MCF 10A (cell line): ENCODE measurements at regions of chr2 and their contacts with region 1.

Region 1: GRCh38 chr2:235493775-235494715 is at the start of gene AGAP1:
- DNase-seq: peak; percentile 83
- H3K4me3 Mint-ChIP-seq: peak within 1 kb of the TSS; percentile 77
- H3K27ac Mint-ChIP-seq: no peak within 1 kb of the TSS
- H3K4me1 Mint-ChIP-seq: peaks cover 16% of the 10 kb centered on the region
- H3K27me3 Mint-ChIP-seq: no peaks in the 10 kb centered on the region
- CTCF ChIP-seq: no peak
- total RNA-seq, gene AGAP1: 41.3 and 42.4 TPM in 2 replicates

Region 2: DNA sequence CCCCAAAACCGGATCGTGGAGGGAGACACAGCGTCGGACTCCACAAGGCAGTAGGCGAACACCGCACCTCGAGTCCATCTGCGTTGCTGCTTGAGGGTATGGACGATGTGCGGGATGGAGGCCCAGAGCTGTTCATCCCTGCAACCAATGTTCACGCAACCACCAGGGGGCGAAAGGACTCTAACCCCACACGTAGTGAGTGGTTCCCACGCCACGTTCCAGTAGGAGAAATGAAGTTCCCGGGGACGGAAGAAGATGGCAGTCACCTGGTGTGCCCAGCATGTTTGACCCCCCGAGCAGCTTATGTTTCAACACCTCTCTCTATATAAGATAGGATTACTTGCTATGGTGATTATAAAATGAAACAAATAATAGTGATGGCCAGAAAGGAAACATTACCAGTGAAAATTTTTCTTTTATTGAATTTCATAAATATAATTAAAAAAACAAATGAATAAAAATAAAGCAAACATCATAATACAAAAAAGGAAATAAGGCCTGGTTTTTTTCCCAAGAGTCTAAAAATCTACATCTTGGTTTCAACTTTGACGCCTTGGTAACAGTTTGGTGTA is 358.0 kb before region 1 on chr2:
- CTCF ChIA-PET with region 1: interaction called, 4 read pairs
- POLR2A ChIA-PET with region 1: interaction called, 3 read pairs
- intact Hi-C with region 1: loop called (anchors 2 kb)
- DNase-seq: peak; percentile 86
- H3K4me3 Mint-ChIP-seq: peak overlapping the region; percentile 18
- H3K27ac Mint-ChIP-seq: no peak overlapping the region
- H3K4me1 Mint-ChIP-seq: peaks cover 7% of the 10 kb centered on the region
- H3K27me3 Mint-ChIP-seq: peaks cover 36% of the 10 kb centered on the region
- CTCF ChIP-seq: peak; percentile 63

Region 3: GRCh38 chr2:235551965-235552364 is 57.9 kb after region 1 on chr2:
- CTCF ChIA-PET with region 1: no interaction called
- POLR2A ChIA-PET with region 1: no interaction called
- intact Hi-C with region 1: loop called (anchors 5 kb)
- DNase-seq: peak; percentile 70
- H3K4me3 Mint-ChIP-seq: no peak overlapping the region
- H3K27ac Mint-ChIP-seq: no peak overlapping the region
- H3K4me1 Mint-ChIP-seq: peaks cover 6% of the 10 kb centered on the region
- H3K27me3 Mint-ChIP-seq: no peaks in the 10 kb centered on the region
- CTCF ChIP-seq: peak; percentile 57

Region 4: DNA sequence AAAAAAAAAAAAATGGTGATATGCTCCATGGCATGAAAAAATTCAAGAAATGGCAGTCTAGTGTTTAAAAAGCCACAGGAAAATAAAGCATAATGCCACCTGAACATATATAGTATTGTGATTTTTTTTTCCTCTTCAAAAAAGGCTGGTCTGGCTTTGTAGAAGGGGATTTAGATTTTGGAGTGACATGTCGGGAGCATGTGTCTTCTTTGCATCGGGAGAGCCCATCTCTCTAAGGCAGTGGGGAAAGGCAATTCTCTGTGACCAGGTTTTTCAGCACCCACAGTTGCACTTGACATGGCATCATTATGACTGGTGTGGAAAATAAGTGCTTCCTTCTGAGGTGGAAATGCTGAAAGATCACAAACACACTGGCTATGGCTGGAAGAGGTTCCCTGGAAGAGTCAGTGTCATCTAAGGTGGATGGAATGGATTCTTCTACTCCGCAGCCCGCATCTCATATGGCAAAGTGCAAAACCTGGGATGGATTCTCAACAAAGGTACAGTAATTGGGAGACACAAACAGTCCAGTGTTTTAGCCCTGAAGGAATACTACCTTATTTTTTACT is 172.3 kb after region 1 on chr2:
- CTCF ChIA-PET with region 1: no interaction called
- POLR2A ChIA-PET with region 1: no interaction called
- intact Hi-C with region 1: loop called (anchors 10 kb)
- DNase-seq: peak; percentile 88
- H3K4me3 Mint-ChIP-seq: peak overlapping the region; percentile 82
- H3K27ac Mint-ChIP-seq: peak overlapping the region; percentile 83
- H3K4me1 Mint-ChIP-seq: peaks cover 10% of the 10 kb centered on the region
- H3K27me3 Mint-ChIP-seq: no peaks in the 10 kb centered on the region
- CTCF ChIP-seq: no peak